ENCODE measurements at regions of chr20 and their contacts with region 1.

Region 1: DNA sequence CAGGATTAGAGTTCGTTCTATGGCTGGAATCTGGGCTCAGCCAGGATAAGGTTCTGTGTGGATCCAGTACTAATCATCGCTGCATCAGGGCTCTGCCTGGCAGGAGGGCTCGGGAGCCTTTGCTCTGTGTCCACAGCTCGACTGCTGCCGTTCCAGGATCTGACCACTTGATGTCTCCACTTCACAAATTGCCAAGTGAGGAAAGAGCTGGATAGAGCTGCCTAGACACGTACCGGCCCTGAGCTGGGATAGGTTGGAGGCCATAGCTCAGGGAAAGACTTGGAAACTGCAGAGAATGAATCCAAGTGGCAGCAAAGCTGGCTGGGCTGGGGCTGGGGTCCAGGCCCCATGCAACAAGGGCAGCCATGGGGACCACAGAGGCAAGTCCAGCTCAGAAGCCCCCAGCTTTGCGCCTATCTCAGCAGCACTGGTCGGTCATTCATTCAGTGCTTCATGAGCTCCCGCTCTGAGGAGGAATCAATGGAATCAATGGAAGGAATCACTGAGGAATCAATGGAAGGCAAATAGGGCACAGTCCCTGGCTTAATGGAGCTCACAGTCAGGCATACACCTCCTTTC is 38.0 kb upstream of the TOP1 start:
- DNase-seq: peak; percentile 89
- H3K4me3 ChIP-seq: no peak overlapping the region
- H3K27ac ChIP-seq: no peak overlapping the region
- H3K4me1 ChIP-seq: peaks cover 16% of the 10 kb centered on the region
- H3K27me3 ChIP-seq: no peaks in the 10 kb centered on the region
- CTCF ChIP-seq: peak; percentile 88 to 89
- POLR2A ChIP-seq: no peak

Region 2: DNA sequence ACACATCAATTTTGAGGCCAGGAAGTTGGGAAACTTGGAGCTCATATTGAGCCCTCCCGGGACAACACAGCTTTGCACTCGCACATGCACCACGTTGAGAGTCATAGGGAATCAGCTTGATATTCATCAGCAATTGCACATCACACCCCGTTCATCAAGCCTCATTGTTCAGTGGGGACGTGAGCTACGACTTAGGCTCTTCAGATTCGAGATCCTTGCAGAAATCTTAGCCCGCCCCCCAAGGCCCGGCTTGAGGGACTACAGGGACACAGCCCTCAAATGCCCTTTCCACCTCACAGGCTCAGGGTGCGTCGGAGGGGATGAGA is 208.6 kb before region 1 on chr20:
- CTCF ChIA-PET with region 1: no interaction called
- POLR2A ChIA-PET with region 1: no interaction called
- dilution Hi-C with region 1: no loop called
- intact Hi-C with region 1: no loop called
- DNase-seq: no peak
- H3K4me3 ChIP-seq: no peak overlapping the region
- H3K27ac ChIP-seq: no peak overlapping the region
- H3K4me1 ChIP-seq: no peaks in the 10 kb centered on the region
- H3K27me3 ChIP-seq: peaks cover 3 to 5% of the 10 kb centered on the region in 2 experiments
- CTCF ChIP-seq: no peak
- POLR2A ChIP-seq: no peak

Region 3: DNA sequence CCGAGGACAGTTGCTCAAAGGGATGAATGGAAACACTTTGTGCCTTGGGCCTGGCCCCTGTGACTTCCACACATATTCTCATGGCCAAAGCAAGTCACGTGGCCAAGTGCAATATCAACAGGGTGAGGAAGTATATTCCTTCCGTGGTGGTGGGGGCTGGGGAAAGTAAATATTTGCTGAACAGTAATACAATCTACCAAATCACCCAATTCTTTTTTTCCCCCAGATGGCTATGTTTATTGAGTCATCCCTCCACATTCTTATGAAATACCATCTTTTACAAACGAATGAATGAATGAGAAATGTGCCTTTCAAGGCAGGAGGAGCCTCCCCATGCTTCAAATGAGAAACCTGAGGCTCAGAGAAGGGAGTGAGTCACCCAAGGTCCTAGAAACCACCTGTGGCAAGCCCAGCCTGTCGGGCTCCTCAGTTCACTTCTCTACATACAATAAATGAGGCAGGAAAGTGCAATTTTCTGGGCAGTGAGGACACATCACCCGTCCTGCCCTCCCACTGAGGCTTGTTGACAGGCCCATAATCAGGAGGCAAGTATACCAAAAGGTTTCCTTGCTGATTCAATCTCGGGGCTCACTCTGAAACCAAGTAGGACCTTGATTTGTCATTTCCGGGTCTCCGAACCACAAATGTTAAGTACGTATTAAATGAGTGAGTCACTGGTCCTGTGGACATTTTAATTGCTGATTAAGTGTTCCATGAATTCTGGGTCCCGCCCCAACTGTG is 12.7 kb after region 1 on chr20:
- CTCF ChIA-PET with region 1: interaction called, 35 read pairs
- POLR2A ChIA-PET with region 1: interaction called, 3 read pairs
- dilution Hi-C with region 1: no loop called
- intact Hi-C with region 1: loop called (anchors 1 kb)
- DNase-seq: peak; percentile 96
- H3K4me3 ChIP-seq: peak overlapping the region in 1 of 3 experiments; percentile 9
- H3K27ac ChIP-seq: peak overlapping the region; percentile 95
- H3K4me1 ChIP-seq: peaks cover 60% of the 10 kb centered on the region
- H3K27me3 ChIP-seq: no peaks in the 10 kb centered on the region
- CTCF ChIP-seq: no peak
- POLR2A ChIP-seq: no peak

Region 4: DNA sequence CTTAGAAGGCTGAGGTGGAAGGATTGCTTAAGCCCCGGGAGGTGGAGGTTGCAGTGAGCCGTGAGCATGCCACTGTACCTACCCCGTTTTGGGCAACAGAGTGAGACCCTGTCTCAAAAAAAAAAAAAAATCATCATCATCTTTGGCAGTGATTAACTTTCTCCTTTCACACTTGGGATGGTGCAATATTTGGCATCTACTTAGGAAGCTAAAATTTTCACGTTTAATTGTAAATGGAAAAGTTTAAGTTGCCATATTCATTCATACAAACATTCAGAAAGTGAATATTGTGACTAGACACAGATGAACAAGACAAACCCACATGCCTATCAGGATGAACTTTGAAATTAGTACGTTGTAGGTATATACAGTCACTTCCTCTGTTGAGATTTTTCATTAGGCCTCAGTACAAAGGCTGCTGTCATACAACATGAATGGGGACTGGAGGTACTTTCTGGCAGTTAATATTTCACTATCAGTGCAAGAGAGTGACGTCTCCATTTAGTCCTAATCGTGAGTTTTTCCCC is 48.3 kb after region 1 on chr20:
- CTCF ChIA-PET with region 1: interaction called, 87 read pairs
- POLR2A ChIA-PET with region 1: interaction called, 4 read pairs
- dilution Hi-C with region 1: no loop called
- intact Hi-C with region 1: no loop called
- DNase-seq: no peak
- H3K4me3 ChIP-seq: no peak overlapping the region
- H3K27ac ChIP-seq: no peak overlapping the region
- H3K4me1 ChIP-seq: no peaks in the 10 kb centered on the region
- H3K27me3 ChIP-seq: no peaks in the 10 kb centered on the region
- CTCF ChIP-seq: no peak
- POLR2A ChIP-seq: no peak

Region 5: DNA sequence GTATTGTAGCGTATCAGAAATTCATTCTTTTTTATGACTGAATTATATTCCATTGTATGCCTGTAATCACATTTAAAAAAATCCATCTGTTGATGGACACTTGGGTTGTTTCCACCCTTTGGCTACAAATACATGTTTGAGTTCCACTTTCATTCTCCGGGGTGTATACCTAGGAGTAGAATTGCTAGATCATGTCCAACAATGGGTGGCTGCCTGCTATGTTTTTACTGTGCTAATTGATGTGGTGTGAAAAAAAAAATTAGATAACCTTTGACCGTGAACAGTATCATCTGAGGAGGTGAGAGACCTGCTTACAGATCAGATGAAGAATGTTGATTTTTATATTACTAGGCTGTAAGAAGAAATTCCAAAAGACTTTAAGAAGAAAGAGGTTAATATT is 75.1 kb after region 1 on chr20:
- CTCF ChIA-PET with region 1: interaction called, 17 read pairs
- POLR2A ChIA-PET with region 1: no interaction called
- dilution Hi-C with region 1: no loop called
- intact Hi-C with region 1: no loop called
- DNase-seq: no peak
- H3K4me3 ChIP-seq: no peak overlapping the region
- H3K27ac ChIP-seq: no peak overlapping the region
- H3K4me1 ChIP-seq: peaks cover 5% of the 10 kb centered on the region
- H3K27me3 ChIP-seq: no peaks in the 10 kb centered on the region
- CTCF ChIP-seq: no peak
- POLR2A ChIP-seq: no peak

Region 6: DNA sequence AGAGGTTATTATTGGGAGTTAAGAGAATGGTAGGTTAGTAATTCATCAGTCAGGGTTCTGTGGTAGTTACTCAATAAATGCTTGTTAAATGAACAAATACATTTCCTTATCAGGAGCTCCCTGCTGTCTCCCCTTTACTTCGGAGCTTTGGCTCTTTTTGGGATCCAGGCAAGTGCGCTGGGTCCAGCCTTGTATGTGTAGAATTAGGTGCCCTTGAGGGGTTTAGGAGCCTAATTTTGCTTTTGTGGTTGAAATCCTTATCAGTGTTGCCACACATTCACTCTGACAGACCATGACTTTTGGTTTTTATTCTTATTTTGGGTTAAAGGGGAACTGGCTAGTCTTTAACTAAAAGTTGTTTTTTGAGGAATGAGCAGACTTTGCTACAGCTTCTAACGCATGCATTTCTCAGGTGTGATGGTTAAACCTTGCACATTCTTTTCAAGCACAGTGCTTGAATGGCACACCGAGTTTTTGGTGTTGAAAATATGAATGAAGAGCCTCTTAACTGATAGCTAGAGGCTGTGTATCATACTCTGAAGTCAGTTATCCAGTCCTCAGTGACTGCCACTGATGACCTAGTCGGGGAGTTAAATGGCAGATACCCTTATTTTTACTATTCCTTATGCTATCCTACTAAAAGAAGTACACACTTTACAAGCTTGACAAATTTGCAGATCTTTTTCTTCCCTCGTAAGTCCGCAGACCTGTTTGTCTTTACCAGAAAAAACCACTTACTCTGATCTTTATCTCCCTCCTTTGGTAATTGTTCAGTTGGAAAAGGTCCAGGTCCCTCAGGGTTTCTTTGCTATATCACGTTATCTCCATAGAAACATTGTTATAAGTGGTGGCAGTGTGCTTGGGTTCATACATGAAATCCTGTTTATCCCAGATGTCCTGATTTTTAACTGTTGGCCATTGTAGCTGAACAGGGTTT is 96.0 kb after region 1 on chr20:
- CTCF ChIA-PET with region 1: interaction called, 228 read pairs
- POLR2A ChIA-PET with region 1: interaction called, 3 read pairs
- dilution Hi-C with region 1: no loop called
- intact Hi-C with region 1: no loop called
- DNase-seq: peak; percentile 82
- H3K4me3 ChIP-seq: no peak overlapping the region
- H3K27ac ChIP-seq: no peak overlapping the region
- H3K4me1 ChIP-seq: no peaks in the 10 kb centered on the region
- H3K27me3 ChIP-seq: no peaks in the 10 kb centered on the region
- CTCF ChIP-seq: no peak
- POLR2A ChIP-seq: no peak

Region 7: DNA sequence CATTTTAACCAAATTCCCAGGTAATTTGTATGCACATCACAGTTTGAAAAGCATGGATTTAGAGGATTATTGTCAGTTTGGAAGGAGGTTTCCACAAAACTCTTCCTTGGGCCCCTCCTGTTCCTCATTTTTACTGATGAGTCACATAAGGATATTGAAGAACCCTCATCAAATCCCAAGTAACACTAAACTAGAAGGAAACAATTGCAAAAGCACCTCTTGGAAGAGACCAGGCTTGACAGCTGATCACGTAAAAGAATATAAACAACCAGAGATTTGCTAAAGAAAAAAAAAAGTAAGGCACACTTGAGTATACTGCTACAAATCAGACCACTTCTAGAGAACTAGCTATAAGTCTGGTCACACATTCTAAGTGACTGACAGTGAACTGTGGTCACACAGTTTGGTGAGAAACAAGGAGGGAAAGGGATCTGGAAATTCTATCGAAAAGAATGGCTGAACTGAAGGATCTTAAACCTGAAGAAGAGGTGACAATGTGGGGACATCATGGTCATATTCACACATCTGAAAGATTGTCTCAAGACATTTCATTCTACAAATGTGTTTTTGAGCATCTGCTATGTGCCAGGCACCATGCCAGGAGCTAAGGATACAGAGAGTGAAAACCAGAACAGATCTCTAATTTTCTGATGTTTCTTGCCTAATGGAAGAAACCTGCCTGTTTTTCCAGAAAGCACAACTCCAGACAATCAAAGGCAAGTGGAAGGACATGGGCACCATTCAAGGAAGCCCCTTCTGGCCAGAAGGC is 302.8 kb after region 1 on chr20:
- CTCF ChIA-PET with region 1: no interaction called
- POLR2A ChIA-PET with region 1: no interaction called
- dilution Hi-C with region 1: no loop called
- intact Hi-C with region 1: no loop called
- DNase-seq: no peak
- H3K4me3 ChIP-seq: no peak overlapping the region
- H3K27ac ChIP-seq: no peak overlapping the region
- H3K4me1 ChIP-seq: no peaks in the 10 kb centered on the region
- H3K27me3 ChIP-seq: no peaks in the 10 kb centered on the region
- CTCF ChIP-seq: no peak
- POLR2A ChIP-seq: no peak